Kidney (tissue), 22 donors: ENCODE measurements at regions of chr20 and their contacts with region 1.

Region 1: DNA sequence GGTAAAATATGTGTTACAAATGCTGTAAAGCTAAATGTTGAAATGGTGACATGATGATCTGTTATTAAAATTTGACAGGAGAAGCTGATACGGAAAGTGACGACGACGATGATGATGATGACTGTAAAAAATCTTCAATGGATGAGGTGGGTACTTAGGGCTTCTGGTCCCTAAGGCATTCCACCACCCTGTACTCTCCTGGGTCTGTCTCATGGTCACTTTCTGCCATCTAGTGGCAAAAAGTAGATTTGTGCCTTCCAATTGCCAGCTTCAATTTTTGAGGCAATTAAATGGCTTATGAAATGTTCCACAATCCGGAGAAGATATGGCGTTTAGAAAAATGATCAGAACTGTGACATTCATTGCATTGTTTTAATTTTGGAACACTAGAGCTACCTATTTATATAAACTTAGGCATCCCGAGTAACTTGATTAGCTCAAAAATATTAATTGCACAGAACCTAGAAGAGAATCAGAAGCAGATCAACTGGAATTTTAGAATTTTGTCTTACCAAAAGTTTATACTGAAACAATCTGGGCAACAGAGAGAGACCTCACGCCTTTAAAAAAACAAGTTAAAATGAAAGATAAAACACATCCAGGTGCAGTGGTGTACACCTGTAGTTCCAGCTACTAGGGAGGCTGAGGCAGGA is 346.5 kb upstream of the PLCB4 start:
- DNase-seq: peak in 4 of 5 donors; percentile 49 to 86 (median 69)
- H3K4me3 ChIP-seq: no peak overlapping the region
- H3K27ac ChIP-seq: no peak overlapping the region
- H3K4me1 ChIP-seq: no peaks in the 10 kb centered on the region
- H3K27me3 ChIP-seq: no peaks in the 10 kb centered on the region
- CTCF ChIP-seq: peak; percentile 86

Region 2: GRCh38 chr20:8039042-8039441 is 683.4 kb before region 1 on chr20:
- intact Hi-C with region 1: loop called (anchors 5 kb)
- DNase-seq: no peak
- H3K4me3 ChIP-seq: no peak overlapping the region
- H3K27ac ChIP-seq: no peak overlapping the region
- H3K4me1 ChIP-seq: no peaks in the 10 kb centered on the region
- H3K27me3 ChIP-seq: no peaks in the 10 kb centered on the region
- CTCF ChIP-seq: no peak

Region 3: DNA sequence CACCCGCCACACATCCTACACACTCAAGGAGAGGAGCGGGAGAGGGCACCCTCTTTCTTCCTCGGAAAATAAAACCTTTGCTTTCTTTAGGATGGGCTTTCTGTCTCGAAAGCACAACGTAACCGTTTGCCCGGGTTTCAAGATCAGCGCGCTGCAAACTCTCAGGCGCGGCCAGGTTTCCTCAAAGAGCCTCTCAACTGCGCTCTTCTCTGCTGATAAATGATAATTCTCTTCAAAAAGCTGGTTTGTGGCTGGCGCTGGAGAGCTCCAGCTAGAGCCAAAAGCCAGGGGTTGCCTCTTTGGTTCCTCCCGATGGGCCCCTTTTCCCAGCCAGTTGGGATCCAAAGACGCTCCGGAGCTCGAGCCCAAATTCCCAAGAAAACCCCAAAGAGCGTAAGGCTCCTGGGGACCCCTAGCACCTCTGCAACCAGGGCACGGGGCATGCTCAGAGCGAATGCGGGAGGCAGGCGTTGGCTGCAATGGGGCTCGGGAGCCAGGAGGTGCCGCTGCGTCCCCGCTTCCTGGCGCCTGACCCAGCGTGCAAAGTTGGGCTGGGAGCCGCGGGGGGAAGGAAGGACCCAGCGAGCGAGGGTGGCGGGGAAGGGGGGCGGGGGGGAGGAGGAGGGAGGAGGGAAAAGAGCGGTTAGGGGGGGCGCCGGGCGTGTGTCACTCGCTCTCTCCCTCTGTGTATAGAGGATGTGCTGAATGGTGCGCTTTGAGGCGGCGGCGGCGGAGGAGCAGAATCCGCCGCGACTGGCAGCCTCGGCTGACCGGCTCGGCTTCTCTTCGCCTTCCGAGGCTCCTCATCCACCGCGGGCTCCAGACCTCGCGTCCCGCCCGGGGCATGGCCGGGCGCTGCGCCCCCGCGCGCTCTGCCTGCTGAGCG is 590.6 kb before region 1 on chr20 and contains the start of gene PLCB1:
- intact Hi-C with region 1: loop called (anchors 10 kb)
- DNase-seq: peak; percentile 93 to 96 (median 93)
- H3K4me3 ChIP-seq: peak within 1 kb of the TSS; percentile 39 to 71 (median 60)
- H3K27ac ChIP-seq: peak within 1 kb of the TSS in 1 of 2 donors; percentile 35
- H3K4me1 ChIP-seq: no peaks in the 10 kb centered on the region
- H3K27me3 ChIP-seq: no peaks in the 10 kb centered on the region
- CTCF ChIP-seq: peak; percentile 95
- total RNA-seq, gene PLCB1: 107 TPM

Region 4: DNA sequence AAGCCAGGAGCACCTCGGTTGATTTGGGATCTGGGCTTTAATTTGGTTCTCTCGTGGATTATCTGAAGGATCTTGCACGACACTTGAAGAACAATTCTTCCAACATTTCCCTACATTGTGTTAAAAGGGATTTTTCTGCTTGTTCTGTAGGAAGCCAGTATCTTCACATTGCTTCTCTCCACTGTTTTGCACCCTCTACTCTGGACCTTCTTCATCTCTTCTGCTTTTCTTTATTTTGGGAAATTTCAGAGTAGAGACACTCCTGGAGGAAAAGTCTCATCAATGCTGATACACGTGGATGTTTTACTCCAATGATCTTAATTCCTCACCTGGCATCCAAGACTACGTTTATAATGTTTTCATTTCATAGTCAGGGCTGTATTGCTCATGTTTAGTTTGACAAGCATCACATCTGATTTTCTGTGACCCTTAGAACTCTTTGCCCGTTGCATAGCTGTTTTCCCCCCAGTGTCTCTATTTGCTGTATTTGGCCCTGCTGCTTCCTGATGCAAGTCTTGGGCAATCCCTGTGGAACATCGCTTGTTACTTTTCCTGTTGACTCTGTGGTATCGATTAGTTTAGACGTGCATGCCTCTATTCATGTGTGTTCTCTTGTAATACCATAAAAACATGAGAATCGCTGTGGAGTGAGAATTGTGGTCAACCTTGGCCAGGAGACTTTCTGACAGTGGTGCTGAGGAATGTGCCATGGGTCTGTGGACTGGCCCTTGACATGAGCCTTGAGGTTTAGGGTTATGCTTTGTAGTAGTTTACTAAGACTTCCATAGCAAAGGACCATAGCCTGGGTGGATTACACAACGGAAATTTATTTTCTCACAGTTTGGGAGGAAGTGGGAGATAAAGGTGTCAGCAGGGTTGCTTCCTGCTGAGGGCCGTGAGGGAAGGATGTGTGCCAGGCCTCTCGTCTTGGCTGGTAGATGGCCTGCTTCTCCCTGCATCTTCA is 577.8 kb before region 1 on chr20:
- intact Hi-C with region 1: no loop called
- DNase-seq: no peak
- H3K4me3 ChIP-seq: no peak overlapping the region
- H3K27ac ChIP-seq: no peak overlapping the region
- H3K4me1 ChIP-seq: no peaks in the 10 kb centered on the region
- H3K27me3 ChIP-seq: no peaks in the 10 kb centered on the region
- CTCF ChIP-seq: no peak

Region 5: GRCh38 chr20:8589956-8590355 is 132.4 kb before region 1 on chr20:
- intact Hi-C with region 1: no loop called
- DNase-seq: no peak
- H3K4me3 ChIP-seq: no peak overlapping the region
- H3K27ac ChIP-seq: no peak overlapping the region
- H3K4me1 ChIP-seq: no peaks in the 10 kb centered on the region
- H3K27me3 ChIP-seq: no peaks in the 10 kb centered on the region
- CTCF ChIP-seq: no peak